ENCODE measurements at regions of chr17 and their contacts with region 1.

Region 1: DNA sequence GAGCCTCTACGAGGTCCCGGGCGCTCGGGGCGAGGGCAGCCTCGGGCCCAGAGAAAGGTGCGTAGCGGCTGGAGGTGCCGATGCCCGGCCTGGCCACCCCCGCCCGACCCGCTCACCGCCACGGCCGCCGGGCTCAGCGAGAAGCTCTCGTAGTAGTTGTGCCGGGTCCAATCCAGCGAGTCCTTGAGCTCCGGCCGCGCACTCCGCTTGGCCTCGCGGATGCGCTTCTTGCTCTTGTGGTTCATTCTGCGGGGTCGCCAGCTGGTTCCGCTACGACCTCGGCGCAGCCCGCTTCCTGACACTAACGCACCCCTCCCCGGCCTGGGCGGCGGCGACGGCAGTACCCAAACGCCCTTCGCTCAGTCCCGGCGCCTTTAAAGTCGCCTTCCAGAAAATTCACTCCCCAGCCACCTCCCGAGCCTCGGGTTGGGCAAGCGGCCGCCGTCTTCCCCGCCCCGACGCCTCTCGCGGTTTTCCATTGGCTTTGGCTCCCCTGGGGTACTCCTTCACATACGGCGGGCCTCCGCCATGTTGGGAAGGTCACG is at the start of gene JMJD6:
- DNase-seq: peak; percentile 91 to 98
- H3K4me3 ChIP-seq: peak within 1 kb of the TSS; percentile 93 to 100
- H3K27ac ChIP-seq: peak within 1 kb of the TSS; percentile 96 to 98
- H3K4me1 ChIP-seq: peaks cover 24 to 33% of the 10 kb centered on the region in 2 donors
- H3K27me3 ChIP-seq: no peaks in the 10 kb centered on the region
- CTCF ChIP-seq: no peak
- total RNA-seq, gene JMJD6: 29.4 TPM

Region 2: DNA sequence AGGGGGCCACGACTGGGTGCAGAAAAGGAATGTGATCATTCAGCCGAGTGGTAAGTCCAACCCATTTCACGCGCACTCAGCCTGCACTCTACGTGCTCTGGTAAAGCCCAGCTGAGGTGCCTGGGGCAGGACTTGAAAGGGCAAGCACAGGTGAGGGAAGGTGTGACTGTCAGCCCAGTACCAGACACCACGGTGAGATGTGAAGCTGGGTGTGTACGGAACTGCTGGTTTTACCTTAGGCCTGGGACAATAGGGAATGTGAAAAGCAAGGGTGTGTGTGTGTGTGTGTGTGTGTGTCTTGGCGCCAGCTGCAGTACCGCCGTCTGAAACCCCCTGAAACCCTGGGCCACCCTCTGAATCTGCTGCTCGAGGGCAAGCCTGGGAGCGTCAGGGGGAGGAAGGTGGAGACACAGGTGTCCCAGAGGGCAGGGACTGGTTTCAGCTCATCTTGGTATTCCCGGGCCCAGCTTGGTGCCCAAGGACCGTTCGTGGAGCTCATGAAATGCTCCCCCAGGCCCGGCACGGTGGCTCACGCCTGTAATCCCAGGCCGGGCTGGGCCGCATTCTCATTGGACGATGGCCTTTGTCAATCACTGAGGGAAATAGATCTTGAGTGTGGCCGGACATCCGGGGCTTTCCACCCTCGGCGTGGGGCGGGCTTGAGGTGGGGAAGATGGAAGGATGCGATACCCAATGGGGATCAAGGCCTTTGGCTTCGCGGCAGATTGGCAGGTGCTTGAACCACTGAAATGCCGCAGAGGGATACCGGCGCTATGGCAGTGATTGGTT is 55.0 kb before region 1 on chr17:
- intact Hi-C with region 1: loop called (anchors 1 kb)
- DNase-seq: peak; percentile 99 to 100
- H3K4me3 ChIP-seq: peak overlapping the region; percentile 66 to 67
- H3K27ac ChIP-seq: peak overlapping the region; percentile 77 to 79
- H3K4me1 ChIP-seq: peaks cover 0 to 8% of the 10 kb centered on the region in 2 donors
- H3K27me3 ChIP-seq: peaks cover 3% of the 10 kb centered on the region
- CTCF ChIP-seq: no peak

Region 3: DNA sequence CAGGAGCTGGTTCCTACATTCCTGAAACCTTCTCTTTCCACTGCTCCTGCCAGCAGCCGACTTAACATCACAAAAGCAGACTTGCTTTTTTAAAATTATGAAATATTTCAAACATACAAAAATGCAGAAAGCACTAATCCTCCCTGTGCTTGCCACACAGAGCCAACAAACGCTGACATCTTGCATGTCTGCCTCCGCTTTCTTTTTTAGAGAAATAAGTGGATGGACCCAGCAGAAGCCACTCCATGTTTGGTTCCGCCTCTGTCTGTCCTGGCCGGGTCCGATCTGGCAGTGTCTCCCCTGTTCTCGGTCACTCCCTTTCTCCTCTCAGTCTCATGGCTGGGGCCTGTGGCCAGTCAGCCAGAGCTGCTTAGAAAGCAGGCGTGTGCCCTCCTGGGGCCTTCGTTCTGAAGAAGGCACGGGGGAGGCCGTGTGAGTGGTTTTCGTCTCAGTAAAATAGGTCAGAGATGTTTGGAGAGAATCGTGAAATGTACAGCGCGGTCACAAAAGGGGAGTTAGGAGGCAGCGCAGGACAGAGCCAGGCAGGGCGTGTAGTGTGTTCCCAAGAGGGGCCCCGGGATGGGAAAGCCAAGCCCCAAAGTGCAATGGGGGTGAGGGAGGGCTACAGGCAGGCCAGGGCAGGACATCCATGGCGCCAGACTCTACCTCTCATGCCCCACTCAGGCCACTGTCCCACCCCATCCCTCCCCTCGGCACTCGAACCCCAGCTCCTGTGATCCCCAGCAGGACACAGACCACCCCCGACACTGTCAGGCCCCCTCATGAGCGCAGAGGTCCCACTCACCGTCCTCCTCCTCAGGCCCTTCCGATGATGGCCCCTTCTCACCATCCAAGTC is 38.8 kb before region 1 on chr17:
- intact Hi-C with region 1: loop called (anchors 5 kb)
- DNase-seq: peak in 1 of 2 donors; percentile 83
- H3K4me3 ChIP-seq: peak overlapping the region in 1 of 2 donors; percentile 21
- H3K27ac ChIP-seq: peak overlapping the region; percentile 89 to 91
- H3K4me1 ChIP-seq: peaks cover 9 to 40% of the 10 kb centered on the region in 2 donors
- H3K27me3 ChIP-seq: no peaks in the 10 kb centered on the region
- CTCF ChIP-seq: no peak

Region 4: DNA sequence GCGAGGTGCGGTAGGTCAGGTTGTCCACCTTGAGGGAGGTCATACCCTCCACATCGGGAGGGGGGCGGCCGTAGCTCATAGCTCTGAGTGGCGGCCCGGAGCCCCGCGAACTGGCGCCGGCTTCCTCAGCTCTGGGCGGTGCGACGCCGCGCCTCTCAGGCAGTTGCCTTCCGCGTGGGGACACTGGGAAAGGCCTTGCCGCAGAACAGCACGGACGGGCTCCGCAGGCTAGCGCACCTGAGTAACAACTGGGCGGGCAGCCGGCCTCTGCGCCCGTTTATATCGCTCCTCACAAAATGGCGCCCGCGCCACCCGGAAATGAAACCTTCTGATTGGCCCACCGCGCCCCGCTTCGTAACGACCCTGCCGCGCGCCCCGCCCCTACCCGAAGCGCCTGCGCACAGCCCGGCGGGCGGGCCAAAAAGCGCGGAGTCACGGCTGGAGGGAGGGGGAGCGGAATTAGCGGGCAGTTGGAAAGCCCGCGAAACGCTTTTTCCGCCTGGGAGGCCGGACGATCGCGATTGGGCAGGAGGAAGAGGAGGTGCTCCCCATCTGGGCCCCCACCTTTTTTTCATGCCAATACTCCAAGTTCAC is 10.9 kb after region 1 on chr17 and contains the start of gene SRSF2:
- intact Hi-C with region 1: loop called (anchors 1 kb)
- DNase-seq: peak; percentile 89 to 99
- H3K4me3 ChIP-seq: peak within 1 kb of the TSS; percentile 92 to 97
- H3K27ac ChIP-seq: peak within 1 kb of the TSS; percentile 95 to 98
- H3K4me1 ChIP-seq: peaks cover 5 to 47% of the 10 kb centered on the region in 2 donors
- H3K27me3 ChIP-seq: no peaks in the 10 kb centered on the region
- CTCF ChIP-seq: no peak
- total RNA-seq, gene SRSF2: 429 TPM

Measured in ascending aorta (tissue), 2 donors.